AG04450 (cell line): ENCODE measurements at regions of chr1 and their contacts with region 1.

Region 1: GRCh38 chr1:116498789-116499628 is 71.8 kb downstream of the CD58 start:
- DNase-seq: no peak
- H3K4me3 ChIP-seq: no peak overlapping the region
- H3K27ac ChIP-seq: no peak overlapping the region
- H3K27me3 ChIP-seq: no peaks in the 10 kb centered on the region
- CTCF ChIP-seq: peak; percentile 91

Region 2: GRCh38 chr1:115807723-115808122 is 691.3 kb before region 1 on chr1:
- CTCF ChIA-PET with region 1: interaction called, 11 read pairs
- POLR2A ChIA-PET with region 1: no interaction called
- DNase-seq: peak; percentile 26
- H3K4me3 ChIP-seq: no peak overlapping the region
- H3K27ac ChIP-seq: no peak overlapping the region
- H3K27me3 ChIP-seq: peaks cover 2% of the 10 kb centered on the region
- CTCF ChIP-seq: peak; percentile 84

Region 3: DNA sequence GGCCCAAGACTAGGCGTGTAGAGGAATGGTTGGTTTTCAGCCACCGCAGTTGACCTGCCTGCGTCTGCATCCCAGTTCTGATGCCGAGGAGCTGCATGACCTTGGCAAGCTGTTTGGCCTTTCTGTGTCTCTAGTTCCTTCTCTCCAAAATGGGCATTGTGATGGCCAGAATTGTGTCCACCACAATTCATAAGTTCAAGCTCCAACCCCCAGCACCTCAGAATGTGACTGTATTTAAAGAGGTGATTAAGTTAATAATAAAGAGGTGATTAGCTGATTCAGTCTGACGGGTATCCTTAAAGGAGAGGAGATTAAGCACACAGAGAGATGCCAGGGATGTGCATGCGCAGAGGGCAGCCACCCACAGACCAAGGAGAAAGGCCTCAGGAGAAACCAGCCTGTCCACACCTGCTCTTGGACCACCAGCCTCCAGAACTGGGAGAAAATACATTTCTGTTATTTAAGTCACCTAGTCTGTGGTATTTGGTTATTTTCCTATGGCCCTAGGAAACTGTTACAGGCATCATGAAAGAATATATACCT is 359.3 kb before region 1 on chr1:
- CTCF ChIA-PET with region 1: interaction called, 215 read pairs
- POLR2A ChIA-PET with region 1: no interaction called
- DNase-seq: no peak
- H3K4me3 ChIP-seq: no peak overlapping the region
- H3K27ac ChIP-seq: no peak overlapping the region
- H3K27me3 ChIP-seq: no peaks in the 10 kb centered on the region
- CTCF ChIP-seq: no peak

Region 4: GRCh38 chr1:116151739-116152576 is 347.1 kb before region 1 on chr1:
- CTCF ChIA-PET with region 1: interaction called, 40 read pairs
- POLR2A ChIA-PET with region 1: no interaction called
- DNase-seq: peak; percentile 21
- H3K4me3 ChIP-seq: peak overlapping the region; percentile 56
- H3K27ac ChIP-seq: no peak overlapping the region
- H3K27me3 ChIP-seq: peaks cover 8% of the 10 kb centered on the region
- CTCF ChIP-seq: peak; percentile 73

Region 5: DNA sequence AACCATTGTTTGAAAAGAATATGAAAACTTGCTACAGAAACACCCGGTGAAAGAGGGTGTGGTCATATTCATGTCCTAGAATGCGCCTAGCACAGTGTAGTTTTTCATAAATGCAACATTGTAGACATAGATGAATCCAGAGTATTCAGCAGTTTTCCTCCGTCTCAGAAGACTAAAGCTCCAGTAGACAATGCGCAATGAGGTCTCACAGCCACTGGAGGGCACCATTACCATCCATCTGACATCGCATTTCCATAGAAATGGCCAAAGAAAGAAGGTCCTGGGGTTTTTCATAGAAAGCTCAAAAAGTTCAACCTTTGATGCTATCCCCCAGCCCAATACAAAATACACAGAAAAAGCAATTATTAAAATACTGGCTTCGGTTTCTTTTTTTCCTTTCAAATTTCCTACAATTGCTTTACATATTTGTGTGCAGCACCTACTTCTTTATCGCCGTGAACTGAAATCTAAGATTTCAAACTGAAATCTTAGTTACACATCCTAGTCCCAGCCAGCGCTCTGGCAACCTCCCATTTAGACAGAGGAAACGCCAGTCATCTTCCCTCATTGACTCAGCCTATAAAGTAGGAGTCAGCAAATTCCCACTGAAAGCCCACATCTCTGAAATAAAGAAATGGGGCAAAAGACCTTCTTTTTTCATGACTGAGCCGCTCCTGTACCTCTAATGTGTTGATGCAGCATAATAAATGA is 75.7 kb after region 1 on chr1:
- CTCF ChIA-PET with region 1: interaction called, 11 read pairs
- POLR2A ChIA-PET with region 1: no interaction called
- DNase-seq: no peak
- H3K4me3 ChIP-seq: no peak overlapping the region
- H3K27ac ChIP-seq: no peak overlapping the region
- H3K27me3 ChIP-seq: peaks cover 29% of the 10 kb centered on the region
- CTCF ChIP-seq: peak; percentile 97

Region 6: GRCh38 chr1:116769561-116769977 is 270.6 kb after region 1 on chr1:
- CTCF ChIA-PET with region 1: no interaction called
- POLR2A ChIA-PET with region 1: no interaction called
- DNase-seq: no peak
- H3K4me3 ChIP-seq: no peak overlapping the region
- H3K27ac ChIP-seq: no peak overlapping the region
- H3K27me3 ChIP-seq: no peaks in the 10 kb centered on the region
- CTCF ChIP-seq: no peak

Region 7: GRCh38 chr1:116971258-116971860 is 472.4 kb after region 1 on chr1:
- CTCF ChIA-PET with region 1: no interaction called
- POLR2A ChIA-PET with region 1: no interaction called
- DNase-seq: no peak
- H3K4me3 ChIP-seq: no peak overlapping the region
- H3K27ac ChIP-seq: no peak overlapping the region
- H3K27me3 ChIP-seq: no peaks in the 10 kb centered on the region
- CTCF ChIP-seq: no peak